Dorsolateral prefrontal cortex (tissue), 120 donors: ENCODE measurements at regions of chr15 and their contacts with region 1.

Region 1: DNA sequence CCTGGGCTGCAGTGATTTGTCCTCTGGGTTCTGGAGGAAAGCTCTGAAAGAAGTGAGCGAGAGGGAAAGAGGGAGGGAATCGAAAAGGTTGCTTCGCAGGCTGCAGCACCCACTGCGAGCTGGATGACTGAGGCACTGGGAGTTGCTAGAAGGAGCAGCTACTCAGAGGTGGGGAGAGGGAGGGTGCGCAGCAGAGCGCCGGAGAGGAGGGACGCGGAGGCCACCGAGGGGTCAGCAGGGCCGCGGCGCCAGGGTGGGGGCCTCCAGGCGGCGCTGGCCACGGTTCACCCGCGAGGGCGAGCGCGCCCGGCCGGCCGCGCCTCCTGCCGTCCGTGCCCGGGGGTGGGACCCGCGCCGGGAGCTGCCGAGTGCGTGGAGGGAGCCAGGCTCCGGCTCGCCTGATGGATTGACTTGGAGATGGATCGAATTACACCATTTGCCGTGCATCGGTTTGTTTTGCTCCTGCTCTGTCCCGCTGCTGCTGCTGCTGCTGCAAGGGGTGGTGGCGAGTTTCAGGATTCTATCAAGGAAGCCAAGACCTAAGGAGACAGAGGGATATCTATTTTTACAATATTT is at the start of gene SEMA6D:
- DNase-seq: peak; percentile 24 to 87 (median 78)
- H3K4me3 ChIP-seq: peak within 1 kb of the TSS; percentile 59 to 97 (median 85)
- H3K27ac ChIP-seq: peak within 1 kb of the TSS; percentile 85 to 98 (median 96)
- H3K27me3 ChIP-seq: no peaks in the 10 kb centered on the region
- CTCF ChIP-seq: peak in 49 of 56 donors; percentile 5 to 75 (median 51)
- total RNA-seq, gene SEMA6D: 43.1 to 116 (median 68.1) TPM

Region 2: DNA sequence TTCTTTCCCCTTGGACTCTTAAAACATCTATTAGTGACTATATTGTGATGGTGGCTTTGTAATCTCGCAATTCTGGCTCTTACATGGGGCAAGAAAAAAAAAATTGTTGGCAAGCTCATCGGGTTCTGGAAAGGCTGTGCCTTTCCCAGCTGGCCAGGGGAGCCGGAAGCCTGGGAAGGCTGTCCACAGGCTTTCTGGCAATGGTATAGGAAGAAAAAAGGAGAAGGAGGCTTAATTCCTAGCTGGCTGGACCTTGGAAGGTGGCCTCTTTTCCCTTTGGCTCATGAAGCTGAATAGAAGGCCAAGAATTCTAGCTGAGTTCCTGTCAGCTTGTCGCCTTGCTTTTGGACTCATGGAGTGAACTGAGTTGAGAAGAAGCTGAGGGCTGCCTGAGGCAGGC is 243.3 kb before region 1 on chr15:
- intact Hi-C with region 1: loop called in 1 of 2 experiments (anchors 10 kb)
- DNase-seq: peak in 3 of 10 donors; percentile 9 to 48 (median 32)
- H3K4me3 ChIP-seq: no peak overlapping the region
- H3K27ac ChIP-seq: peak overlapping the region in 2 of 59 donors; percentile 14 to 27
- H3K27me3 ChIP-seq: no peaks in the 10 kb centered on the region
- CTCF ChIP-seq: no peak

Region 3: DNA sequence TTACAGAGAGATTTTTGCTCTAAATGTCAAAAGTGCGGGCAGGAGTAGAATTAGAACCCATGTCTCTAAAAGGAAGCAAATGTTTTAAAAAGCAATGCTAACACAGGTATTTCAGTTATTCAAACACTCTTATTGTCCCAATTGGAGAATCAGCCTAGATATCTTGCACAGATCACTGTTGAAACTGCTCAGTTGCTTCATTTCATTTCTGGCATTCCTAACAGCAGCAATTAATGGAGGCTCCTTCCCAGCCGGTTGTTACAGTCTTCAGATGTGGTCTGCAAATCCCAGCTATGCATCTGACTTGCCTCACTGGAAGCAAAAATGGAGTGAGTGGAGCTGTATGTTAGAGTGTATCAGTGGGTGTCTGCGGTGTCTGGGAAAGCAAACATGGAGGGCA is 55.4 kb before region 1 on chr15:
- intact Hi-C with region 1: no loop called
- DNase-seq: no peak
- H3K4me3 ChIP-seq: no peak overlapping the region
- H3K27ac ChIP-seq: no peak overlapping the region
- H3K27me3 ChIP-seq: no peaks in the 10 kb centered on the region
- CTCF ChIP-seq: no peak

Region 4: DNA sequence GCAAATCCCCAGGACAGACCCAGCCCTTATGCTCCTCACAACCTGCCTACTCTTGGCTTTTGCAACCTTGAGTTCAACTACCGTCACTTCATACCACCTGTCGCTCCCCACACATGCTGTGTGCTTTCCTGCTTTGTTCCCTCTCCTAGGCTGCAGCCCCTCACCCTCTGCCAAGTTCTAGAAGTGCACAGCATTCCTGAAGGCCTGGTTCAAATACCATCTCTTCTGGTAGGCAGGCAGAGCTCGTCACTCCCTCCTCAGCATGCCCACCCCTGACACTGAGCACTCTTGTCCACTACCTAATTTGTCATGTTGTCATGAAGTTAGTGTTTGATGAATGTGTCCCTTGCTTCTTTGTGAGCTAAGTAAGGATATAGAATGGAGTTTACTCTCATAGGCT is 129.8 kb after region 1 on chr15:
- intact Hi-C with region 1: loop called (anchors 2 to 5 kb)
- DNase-seq: no peak
- H3K4me3 ChIP-seq: no peak overlapping the region
- H3K27ac ChIP-seq: peak overlapping the region; percentile 23 to 96 (median 84)
- H3K27me3 ChIP-seq: no peaks in the 10 kb centered on the region
- CTCF ChIP-seq: no peak

Region 5: GRCh38 chr15:48285329-48286214 is 568.4 kb after region 1 on chr15:
- intact Hi-C with region 1: loop called in 1 of 2 experiments (anchors 10 kb)
- DNase-seq: peak in 4 of 10 donors; percentile 10 to 53 (median 41)
- H3K4me3 ChIP-seq: peak overlapping the region in 57 of 59 donors; percentile 3 to 68 (median 49)
- H3K27ac ChIP-seq: peak overlapping the region in 1 of 59 donors; percentile 30
- H3K27me3 ChIP-seq: no peaks in the 10 kb centered on the region
- CTCF ChIP-seq: peak; percentile 62 to 95 (median 82)